Heart right ventricle (tissue), 16 donors: ENCODE measurements at regions of chr10 and their contacts with region 1.

Region 1: DNA sequence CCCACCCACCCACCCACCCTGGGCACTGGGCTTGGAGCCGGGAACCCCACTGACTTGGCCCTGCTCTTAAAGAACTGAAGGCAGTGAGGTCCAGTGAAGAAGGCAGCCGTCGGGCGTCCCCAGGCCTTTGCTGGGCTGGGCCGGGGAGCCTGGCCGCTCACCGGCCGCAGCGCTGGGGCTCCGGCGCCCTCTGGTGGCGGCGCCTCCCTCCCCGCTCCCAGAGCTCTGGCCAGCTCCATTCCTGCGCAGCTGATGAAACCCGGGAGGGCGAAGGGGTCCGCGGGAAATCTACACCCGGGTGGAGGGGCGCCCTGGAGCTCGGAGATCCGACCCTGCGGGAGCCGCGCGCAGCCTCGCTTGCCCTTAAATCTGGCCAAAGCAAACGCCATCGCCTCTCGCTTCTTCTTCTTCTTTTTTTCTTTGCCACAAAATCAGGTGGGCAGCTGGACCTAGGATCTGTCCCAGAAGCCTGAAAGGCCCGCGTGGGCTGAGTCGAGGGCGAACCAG is 1.7 kb upstream of the CXCL12 start:
- DNase-seq: peak; percentile 51 to 79
- ATAC-seq: peak; percentile 80 to 87 (median 83)
- H3K4me3 ChIP-seq: peak overlapping the region in 5 of 10 donors; percentile 19 to 95 (median 25)
- H3K27ac ChIP-seq: peak overlapping the region in 3 of 10 donors; percentile 81 to 92 (median 91)
- H3K4me1 ChIP-seq: peaks cover 3 to 51% (median 22%) of the 10 kb centered on the region in 9 donors
- H3K27me3 ChIP-seq: peaks cover 0 to 48% (median 0%) of the 10 kb centered on the region in 7 donors
- CTCF ChIP-seq: peak; percentile 87 to 95 (median 91)

Region 2: DNA sequence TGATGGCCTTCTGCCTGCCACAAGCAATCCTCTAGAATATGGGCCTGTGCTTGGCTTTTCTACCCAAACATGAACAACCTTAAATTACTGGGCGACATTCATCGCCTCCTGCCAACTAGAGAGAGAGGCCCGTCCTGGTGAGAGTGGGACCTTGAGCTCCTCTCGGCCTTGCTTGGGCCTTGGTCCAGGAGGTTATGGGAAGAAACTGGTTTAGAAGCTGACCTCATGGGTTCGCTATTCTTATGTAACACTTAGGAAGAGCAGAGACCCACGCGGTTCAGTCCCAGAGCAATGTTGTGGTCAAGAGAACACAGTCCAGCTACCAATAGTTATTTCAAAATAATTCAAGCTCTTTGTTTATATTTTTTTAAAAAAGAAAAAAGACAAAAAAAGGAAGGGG is 561.7 kb before region 1 on chr10:
- intact Hi-C with region 1: loop called in 1 of 10 experiments (anchors 10 kb)
- DNase-seq: peak; percentile 65 to 90
- ATAC-seq: peak; percentile 90 to 95 (median 95)
- H3K4me3 ChIP-seq: no peak overlapping the region
- H3K27ac ChIP-seq: peak overlapping the region; percentile 29 to 96 (median 87)
- H3K4me1 ChIP-seq: peaks cover 14 to 58% (median 49%) of the 10 kb centered on the region in 9 donors
- H3K27me3 ChIP-seq: no peaks in the 10 kb centered on the region
- CTCF ChIP-seq: no peak

Region 3: DNA sequence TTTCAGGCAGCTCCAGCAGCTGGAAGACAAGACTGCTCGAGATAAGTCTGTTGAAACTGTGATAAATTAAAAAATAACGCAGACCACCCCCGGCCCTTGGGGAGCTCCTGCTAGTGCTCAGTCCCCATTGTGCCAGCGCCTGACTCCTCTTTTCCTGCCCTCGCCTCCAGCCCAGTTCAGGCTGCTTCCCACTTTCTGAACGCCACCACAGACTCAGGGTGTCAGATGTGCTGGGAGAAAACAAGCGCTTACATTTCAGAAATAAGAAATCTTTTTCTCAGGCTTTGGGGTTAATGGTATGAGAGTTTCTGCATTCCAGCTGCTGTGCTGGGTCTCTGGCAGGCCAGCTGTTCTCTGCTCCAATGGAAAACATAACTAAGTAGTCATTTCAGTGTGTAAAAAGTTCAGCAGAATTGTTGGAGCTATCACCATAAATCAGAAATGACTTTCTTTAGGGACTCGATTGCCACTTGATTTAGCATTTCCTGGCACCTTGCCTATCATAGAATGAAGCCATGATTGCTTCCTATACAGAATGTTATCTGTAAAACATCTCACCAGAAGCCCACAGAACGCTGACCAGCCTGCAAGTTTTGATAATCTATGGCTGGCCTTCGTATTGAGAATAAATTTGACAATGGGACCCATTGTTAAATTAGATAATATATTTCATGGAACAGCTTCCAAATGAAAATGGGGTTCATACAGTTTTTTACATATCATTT is 480.9 kb before region 1 on chr10:
- intact Hi-C with region 1: loop called in 1 of 10 experiments (anchors 5 kb)
- DNase-seq: peak; percentile 43 to 65
- ATAC-seq: peak; percentile 50 to 71 (median 61)
- H3K4me3 ChIP-seq: no peak overlapping the region
- H3K27ac ChIP-seq: peak overlapping the region in 9 of 10 donors; percentile 47 to 85 (median 64)
- H3K4me1 ChIP-seq: peaks cover 12 to 51% (median 32%) of the 10 kb centered on the region in 9 donors
- H3K27me3 ChIP-seq: no peaks in the 10 kb centered on the region
- CTCF ChIP-seq: no peak

Region 4: DNA sequence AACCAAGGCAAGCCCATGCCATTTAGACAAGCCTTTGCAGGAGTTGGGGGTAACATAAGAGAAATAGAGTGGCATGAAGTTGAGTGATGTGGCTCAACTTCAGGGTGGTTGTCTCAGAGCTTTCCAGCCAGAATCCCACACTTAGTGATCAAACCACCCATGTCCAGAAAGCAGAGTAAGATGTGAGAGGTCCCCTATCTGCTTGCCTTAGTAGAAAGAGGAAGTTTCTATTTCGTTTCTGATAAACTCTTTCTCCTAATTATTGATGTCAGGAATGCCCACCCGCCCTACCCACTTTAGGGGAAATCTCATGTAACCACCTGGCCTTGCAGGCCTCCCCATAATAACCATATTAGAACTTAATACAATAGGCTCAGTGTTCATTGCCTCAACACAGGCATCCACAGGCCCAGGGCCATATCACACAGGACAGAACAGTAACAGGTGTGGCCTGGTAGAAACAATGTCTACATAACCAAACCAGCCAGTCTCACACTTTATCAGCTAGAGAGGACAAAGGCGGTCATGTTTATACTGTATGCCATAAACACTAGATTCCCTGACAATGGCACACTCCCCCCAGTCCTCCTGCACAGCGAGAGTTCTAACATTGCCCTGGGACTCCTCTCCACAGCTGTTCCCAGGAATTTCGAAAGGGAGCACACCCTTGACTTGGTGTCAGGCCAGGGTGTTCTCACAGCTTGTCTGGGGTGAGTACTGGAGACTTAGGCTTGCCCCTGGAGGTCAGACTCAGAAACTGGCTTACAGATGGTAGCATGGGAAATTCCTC is 366.1 kb before region 1 on chr10:
- intact Hi-C with region 1: loop called in 1 of 10 experiments (anchors 10 kb)
- DNase-seq: peak in 1 of 2 donors; percentile 42
- ATAC-seq: peak; percentile 41 to 83 (median 67)
- H3K4me3 ChIP-seq: no peak overlapping the region
- H3K27ac ChIP-seq: peak overlapping the region in 1 of 10 donors; percentile 17
- H3K4me1 ChIP-seq: peaks cover 9 to 39% (median 19%) of the 10 kb centered on the region in 9 donors
- H3K27me3 ChIP-seq: no peaks in the 10 kb centered on the region
- CTCF ChIP-seq: no peak

Region 5: DNA sequence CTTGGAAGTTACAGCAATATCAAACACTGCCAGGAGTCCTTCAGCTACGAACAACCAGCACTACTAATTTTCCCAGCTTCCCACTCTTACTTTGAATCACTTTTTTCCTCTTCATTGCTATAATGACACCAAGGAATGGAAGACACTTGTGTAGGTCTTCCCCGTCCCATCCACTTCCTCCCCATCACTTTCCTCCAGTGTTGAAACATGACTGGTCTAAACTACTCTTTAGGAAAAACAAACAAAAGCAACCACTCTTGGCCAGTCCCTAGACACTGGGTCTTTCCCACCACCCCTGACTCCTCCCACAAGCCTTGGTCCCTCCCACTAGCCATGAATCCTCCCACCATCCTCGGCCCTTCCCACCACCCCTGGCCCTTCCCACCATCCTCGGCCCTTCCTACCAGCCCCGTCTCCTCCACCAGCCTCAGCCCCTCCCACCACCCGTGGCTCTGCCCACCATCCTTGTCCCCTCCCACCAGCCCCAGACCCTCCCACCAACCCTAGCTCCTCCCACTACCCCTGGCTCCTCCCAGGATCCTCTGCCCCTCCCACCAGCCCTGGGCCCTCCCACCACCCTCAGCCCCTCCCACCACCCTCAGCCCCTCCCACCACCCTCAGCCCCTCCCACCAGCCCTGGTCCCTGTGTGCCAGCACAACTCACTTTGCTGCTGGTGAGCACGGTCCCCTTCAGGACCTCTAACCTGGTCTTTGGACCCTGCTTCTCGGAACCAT is 70.2 kb before region 1 on chr10:
- intact Hi-C with region 1: loop called in 6 of 10 experiments (anchors 5 to 10 kb)
- DNase-seq: no peak
- ATAC-seq: peak in 1 of 8 donors; percentile 55
- H3K4me3 ChIP-seq: no peak overlapping the region
- H3K27ac ChIP-seq: no peak overlapping the region
- H3K4me1 ChIP-seq: peaks cover 1 to 22% (median 10%) of the 10 kb centered on the region in 9 donors
- H3K27me3 ChIP-seq: no peaks in the 10 kb centered on the region
- CTCF ChIP-seq: no peak

Region 6: DNA sequence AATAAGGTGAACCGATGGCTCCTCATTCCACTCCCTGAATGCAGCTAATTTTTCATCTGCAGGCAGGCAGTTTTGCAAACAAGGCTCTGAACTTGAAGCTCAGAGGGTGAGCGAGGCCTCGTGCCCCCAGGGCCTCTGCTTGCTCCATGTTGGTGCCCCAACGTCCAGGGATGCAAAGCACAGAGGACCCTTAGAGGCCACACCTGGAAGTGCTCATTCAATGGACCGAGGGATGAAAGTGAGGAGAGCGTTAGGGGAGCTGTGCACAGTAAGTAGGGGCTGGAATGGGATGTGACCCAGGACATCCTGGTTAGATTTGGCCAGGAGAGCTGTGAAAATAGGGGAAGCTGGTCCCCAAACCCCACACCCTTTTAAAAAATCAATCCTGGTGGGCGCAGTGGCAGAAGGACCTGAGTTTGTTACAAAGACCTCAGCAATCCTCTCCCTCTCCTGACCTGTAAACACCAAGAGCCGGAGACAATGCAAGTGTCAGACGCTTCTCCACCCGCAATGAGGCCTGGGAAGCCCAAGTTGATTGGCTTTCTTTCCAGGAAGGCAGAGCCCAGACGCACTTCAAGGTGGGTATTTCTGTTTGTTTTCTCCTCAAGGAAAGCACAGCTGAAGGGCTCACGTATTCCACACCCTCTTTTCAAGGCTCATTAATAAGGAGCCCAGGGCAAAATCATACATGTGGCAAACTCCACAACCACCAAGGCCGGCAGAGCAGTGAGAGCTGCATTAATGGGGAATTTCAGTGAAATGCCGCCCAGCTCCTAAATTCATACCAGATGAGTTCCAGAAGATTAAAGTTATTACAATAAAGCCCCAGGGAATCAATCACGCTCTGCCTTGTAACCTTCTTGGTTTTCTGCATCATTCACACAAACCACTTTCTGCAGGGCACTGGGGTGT is 12.4 kb after region 1 on chr10:
- intact Hi-C with region 1: no loop called
- DNase-seq: no peak
- ATAC-seq: no peak
- H3K4me3 ChIP-seq: no peak overlapping the region
- H3K27ac ChIP-seq: no peak overlapping the region
- H3K4me1 ChIP-seq: peaks cover 0 to 7% (median 0%) of the 10 kb centered on the region in 9 donors
- H3K27me3 ChIP-seq: peaks cover 0 to 8% (median 5%) of the 10 kb centered on the region in 7 donors
- CTCF ChIP-seq: no peak

Region 7: DNA sequence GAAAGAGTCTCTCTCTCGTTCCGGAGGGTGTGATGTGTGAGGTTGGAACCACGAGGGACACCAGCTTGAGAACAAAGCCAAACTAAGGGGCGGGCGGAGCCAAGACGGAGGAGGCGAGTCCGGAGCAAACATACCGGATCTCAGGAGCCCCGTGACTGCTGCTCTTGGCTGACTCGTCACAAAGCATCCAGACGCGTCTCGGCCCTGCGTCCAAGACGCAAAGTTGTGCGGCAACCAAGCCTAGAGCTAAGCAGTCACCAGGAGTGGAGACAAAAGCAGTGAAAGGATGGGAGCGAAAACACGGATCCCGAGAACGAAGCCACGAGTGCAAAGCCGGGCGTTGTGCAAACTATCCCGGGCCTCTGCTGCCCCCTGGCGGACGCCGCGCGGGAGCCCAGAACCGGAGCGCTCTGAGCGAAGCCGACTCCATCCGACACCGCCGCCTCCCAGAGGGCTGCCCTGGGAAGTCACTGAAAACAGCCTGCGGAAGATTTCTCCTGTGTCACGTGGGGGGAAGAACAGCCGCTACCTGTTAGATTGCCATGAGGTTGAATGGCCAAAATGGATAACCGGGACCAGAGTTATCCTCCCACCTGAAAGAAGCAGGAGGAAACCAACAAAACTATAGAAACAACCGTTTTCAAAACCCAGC is 478.2 kb after region 1 on chr10:
- intact Hi-C with region 1: loop called in 6 of 10 experiments (anchors 2 to 10 kb)
- DNase-seq: peak; percentile 91 to 95
- ATAC-seq: peak; percentile 92 to 98 (median 97)
- H3K4me3 ChIP-seq: peak overlapping the region; percentile 29 to 60 (median 54)
- H3K27ac ChIP-seq: peak overlapping the region; percentile 0 to 72 (median 63)
- H3K4me1 ChIP-seq: peaks cover 3 to 35% (median 16%) of the 10 kb centered on the region in 9 donors
- H3K27me3 ChIP-seq: peaks cover 0 to 30% (median 7%) of the 10 kb centered on the region in 7 donors
- CTCF ChIP-seq: peak; percentile 95 to 99 (median 98)